Right ventricle myocardium inferior (tissue), 1 donor: ENCODE measurements at regions of chr6 and their contacts with region 1.

Region 1: GRCh38 chr6:89527634-89528033 is 94.7 kb downstream of the ANKRD6 start:
- DNase-seq: no peak
- ATAC-seq: no peak

Region 2: DNA sequence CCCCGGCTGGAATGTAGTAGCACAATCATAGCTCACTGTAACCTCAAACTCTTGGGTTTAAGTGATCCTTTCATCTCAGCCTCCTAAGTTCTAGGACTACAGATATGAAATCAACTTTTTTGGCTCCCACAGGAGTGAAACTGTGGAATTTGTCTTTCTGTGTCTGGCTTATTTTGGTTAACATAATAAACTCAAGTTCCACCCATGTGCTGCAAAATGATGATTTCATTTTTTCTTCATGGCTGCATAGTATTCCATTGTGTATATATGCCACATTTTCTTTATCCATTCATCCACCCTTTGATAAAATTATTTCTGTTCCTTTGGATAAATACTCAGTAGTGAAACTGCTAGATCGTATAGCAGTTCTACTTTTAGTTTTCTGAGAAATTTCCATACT is 594.1 kb before region 1 on chr6:
- intact Hi-C with region 1: no loop called
- DNase-seq: no peak
- ATAC-seq: no peak

Region 3: GRCh38 chr6:89494131-89494796 is 33.4 kb before region 1 on chr6:
- intact Hi-C with region 1: loop called (anchors 5 kb)
- DNase-seq: no peak
- ATAC-seq: no peak